Prostate gland (tissue), 2 donors: ENCODE measurements at regions of chr1 and their contacts with region 1.

Region 1: GRCh38 chr1:22704440-22705067 is 6.1 kb upstream of the EPHB2 start:
- DNase-seq: peak; percentile 85
- H3K4me3 ChIP-seq: no peak overlapping the region
- H3K27ac ChIP-seq: no peak overlapping the region
- H3K4me1 ChIP-seq: no peaks in the 10 kb centered on the region
- H3K27me3 ChIP-seq: no peaks in the 10 kb centered on the region
- CTCF ChIP-seq: peak; percentile 54 to 95 (median 88)
- POLR2A ChIP-seq: no peak

Region 2: GRCh38 chr1:22773981-22774832 is 69.7 kb after region 1 on chr1:
- intact Hi-C with region 1: loop called (anchors 10 kb)
- DNase-seq: peak; percentile 33
- H3K4me3 ChIP-seq: no peak overlapping the region
- H3K27ac ChIP-seq: peak overlapping the region in 1 of 2 donors; percentile 14
- H3K4me1 ChIP-seq: peaks cover 7% of the 10 kb centered on the region
- H3K27me3 ChIP-seq: no peaks in the 10 kb centered on the region
- CTCF ChIP-seq: no peak
- POLR2A ChIP-seq: no peak

Region 3: DNA sequence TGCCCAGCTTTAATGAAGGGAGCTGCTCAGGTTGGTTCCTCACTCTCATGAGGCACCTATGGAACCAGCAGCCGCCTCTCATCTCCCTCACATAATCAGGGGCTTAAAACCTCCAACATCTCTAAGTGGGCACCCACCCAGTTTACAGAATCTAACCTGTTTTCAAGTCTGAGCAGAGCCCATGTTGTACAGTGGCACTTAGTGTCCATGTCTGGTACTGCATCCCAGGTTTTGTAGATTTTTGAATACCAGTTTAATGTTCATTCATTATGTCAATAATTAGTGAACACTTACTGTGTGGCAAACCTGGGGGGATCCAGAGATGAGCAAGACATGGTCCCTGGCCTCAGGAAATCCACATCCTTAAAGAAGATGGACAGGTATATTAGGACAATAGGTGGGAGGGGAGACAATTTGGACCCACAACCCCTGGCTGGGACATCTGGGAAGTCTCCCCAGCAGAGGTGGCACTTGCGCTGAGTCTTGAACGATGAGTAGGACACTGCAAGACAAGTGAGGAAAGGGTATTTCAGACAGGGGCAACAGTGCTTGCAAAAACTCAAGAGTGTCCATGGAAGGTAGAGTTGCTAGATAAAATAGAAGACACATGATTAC is 184.8 kb after region 1 on chr1:
- intact Hi-C with region 1: loop called (anchors 1 kb)
- DNase-seq: peak; percentile 18
- H3K4me3 ChIP-seq: no peak overlapping the region
- H3K27ac ChIP-seq: no peak overlapping the region
- H3K4me1 ChIP-seq: no peaks in the 10 kb centered on the region
- H3K27me3 ChIP-seq: no peaks in the 10 kb centered on the region
- CTCF ChIP-seq: peak; percentile 72 to 85 (median 78)
- POLR2A ChIP-seq: no peak